CD4-positive, alpha-beta T cell (primary cell): ENCODE measurements at regions of chr6 and their contacts with region 1.

Region 1: GRCh38 chr6:170289180-170289931 is 1.5 kb downstream of the DLL1 start:
- DNase-seq: peak in 5 of 14 experiments; percentile 28 to 53 (median 46)
- ATAC-seq: peak; percentile 24
- H3K4me3 ChIP-seq: peak overlapping the region; percentile 76
- H3K4me3 Mint-ChIP-seq: peak overlapping the region; percentile 86
- H3K27ac ChIP-seq: no peak overlapping the region
- H3K27ac Mint-ChIP-seq: peak overlapping the region; percentile 62
- H3K4me1 ChIP-seq: peaks cover 54% of the 10 kb centered on the region
- H3K4me1 Mint-ChIP-seq: peaks cover 43% of the 10 kb centered on the region
- H3K27me3 ChIP-seq: peaks cover 30 to 45% of the 10 kb centered on the region in 2 experiments
- H3K27me3 Mint-ChIP-seq: peaks cover 52% of the 10 kb centered on the region
- CTCF ChIP-seq: no peak

Region 2: GRCh38 chr6:170271771-170272314 is 17.5 kb before region 1 on chr6:
- CTCF ChIA-PET with region 1: no interaction called
- POLR2A ChIA-PET with region 1: interaction called, 50 read pairs
- intact Hi-C with region 1: loop called in 1 of 2 experiments (anchors 1 kb)
- DNase-seq: peak; percentile 38 to 92 (median 72)
- ATAC-seq: peak; percentile 88
- H3K4me3 ChIP-seq: peak overlapping the region; percentile 56
- H3K4me3 Mint-ChIP-seq: peak overlapping the region; percentile 86
- H3K27ac ChIP-seq: peak overlapping the region; percentile 29 to 65
- H3K27ac Mint-ChIP-seq: peak overlapping the region; percentile 92
- H3K4me1 ChIP-seq: peaks cover 30% of the 10 kb centered on the region
- H3K4me1 Mint-ChIP-seq: peaks cover 22% of the 10 kb centered on the region
- H3K27me3 ChIP-seq: peaks cover 0 to 2% of the 10 kb centered on the region in 2 experiments
- H3K27me3 Mint-ChIP-seq: no peaks in the 10 kb centered on the region
- CTCF ChIP-seq: no peak

Region 3: DNA sequence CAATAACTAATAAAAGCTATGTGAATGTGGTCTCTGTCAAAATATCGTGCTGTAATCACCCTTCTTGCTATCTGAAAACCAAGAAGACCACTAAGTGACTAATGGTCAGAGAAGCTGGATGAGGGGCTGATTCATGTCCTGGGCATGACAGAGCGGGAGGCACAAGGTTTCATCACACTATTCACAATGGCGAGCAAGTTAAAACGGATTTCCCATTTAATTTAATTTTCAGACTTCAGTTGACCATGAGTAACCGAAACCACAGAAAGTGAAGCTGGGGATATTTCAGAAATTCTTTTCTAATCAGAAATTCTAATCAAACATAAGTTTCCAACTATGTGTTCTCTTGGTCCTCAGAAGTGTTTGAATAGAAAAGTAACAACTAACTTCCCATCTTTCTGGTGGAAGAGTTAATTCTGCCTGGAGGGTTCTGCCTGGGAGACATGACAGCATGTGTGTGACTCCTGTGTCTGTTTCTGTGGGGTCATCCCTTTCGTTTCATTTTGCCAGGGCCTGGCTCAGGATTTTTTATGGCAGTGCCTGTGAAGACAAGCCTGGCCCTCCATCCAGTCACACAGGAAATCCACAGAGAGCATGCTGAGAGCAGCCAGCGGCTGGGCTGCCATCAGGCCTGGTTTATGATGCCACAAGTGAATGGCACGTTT is 116.1 kb after region 1 on chr6:
- CTCF ChIA-PET with region 1: no interaction called
- POLR2A ChIA-PET with region 1: no interaction called
- intact Hi-C with region 1: no loop called
- DNase-seq: no peak
- ATAC-seq: no peak
- H3K4me3 ChIP-seq: no peak overlapping the region
- H3K4me3 Mint-ChIP-seq: no peak overlapping the region
- H3K27ac ChIP-seq: no peak overlapping the region
- H3K27ac Mint-ChIP-seq: peak overlapping the region; percentile 31
- H3K4me1 ChIP-seq: no peaks in the 10 kb centered on the region
- H3K4me1 Mint-ChIP-seq: no peaks in the 10 kb centered on the region
- H3K27me3 ChIP-seq: no peaks in the 10 kb centered on the region
- H3K27me3 Mint-ChIP-seq: no peaks in the 10 kb centered on the region
- CTCF ChIP-seq: no peak